CD4-positive, alpha-beta memory T cell (primary cell): ENCODE measurements at regions of chr10 and their contacts with region 1.

Region 1: DNA sequence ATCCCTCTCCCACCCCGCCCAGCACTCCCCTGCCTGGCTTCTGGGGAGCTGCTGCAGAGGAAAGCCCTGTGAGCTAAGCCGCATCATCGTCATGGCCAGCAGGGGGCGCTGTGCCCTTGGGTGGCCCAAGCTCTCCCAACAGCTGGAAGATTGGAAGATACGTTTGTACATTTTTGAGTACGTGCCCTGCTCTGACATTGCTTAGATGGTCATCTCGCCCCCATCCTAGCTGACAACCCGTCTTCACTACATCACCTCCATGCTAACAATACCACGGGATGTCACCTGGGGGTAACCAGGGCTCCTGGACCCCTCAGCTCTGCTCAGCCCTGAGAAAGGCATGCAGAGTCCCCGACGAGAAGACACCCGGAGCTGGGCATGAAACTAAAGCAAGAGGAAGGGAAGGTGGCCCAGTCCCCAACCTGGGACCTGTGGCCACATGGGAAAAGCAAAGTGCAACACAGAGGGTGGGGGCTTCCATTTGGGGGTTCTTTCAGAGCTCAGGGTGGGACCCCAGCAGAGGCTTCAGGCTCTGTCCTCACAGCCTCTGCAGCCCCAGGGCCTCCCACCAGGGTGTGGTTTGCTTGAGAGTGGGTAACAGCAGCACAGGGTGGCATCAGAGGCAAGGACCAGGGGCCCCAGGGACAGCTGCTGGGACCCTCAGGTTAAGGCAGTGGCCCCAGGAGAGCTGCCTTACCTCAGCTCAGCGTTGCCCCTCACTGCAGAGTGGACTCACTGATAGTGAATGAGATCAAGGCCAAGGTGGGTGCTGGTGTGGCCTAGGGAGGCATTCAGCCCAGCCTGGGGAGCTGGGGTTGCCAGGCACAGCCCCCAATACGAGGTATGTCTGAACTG is 136.7 kb downstream of the PTPN20 start:
- DNase-seq: peak; percentile 57 to 62 (median 60)
- H3K4me3 ChIP-seq: no peak overlapping the region
- H3K4me3 Mint-ChIP-seq: peak overlapping the region in 5 of 8 donors; percentile 9 to 55 (median 48)
- H3K27ac ChIP-seq: no peak overlapping the region
- H3K27ac Mint-ChIP-seq: peak overlapping the region in 4 of 7 donors; percentile 29 to 85 (median 63)
- H3K4me1 ChIP-seq: peaks cover 18% of the 10 kb centered on the region
- H3K4me1 Mint-ChIP-seq: peaks cover 15 to 25% (median 18%) of the 10 kb centered on the region in 4 donors
- H3K27me3 ChIP-seq: no peaks in the 10 kb centered on the region
- H3K27me3 Mint-ChIP-seq: no peaks in the 10 kb centered on the region

Region 2: GRCh38 chr10:47071891-47072290 is 24.0 kb after region 1 on chr10:
- CTCF ChIA-PET with region 1: interaction called, 11 read pairs
- POLR2A ChIA-PET with region 1: no interaction called
- intact Hi-C with region 1: no loop called
- DNase-seq: no peak
- H3K4me3 ChIP-seq: no peak overlapping the region
- H3K4me3 Mint-ChIP-seq: no peak overlapping the region
- H3K27ac ChIP-seq: no peak overlapping the region
- H3K27ac Mint-ChIP-seq: no peak overlapping the region
- H3K4me1 ChIP-seq: no peaks in the 10 kb centered on the region
- H3K4me1 Mint-ChIP-seq: peaks cover 0 to 3% (median 2%) of the 10 kb centered on the region in 4 donors
- H3K27me3 ChIP-seq: no peaks in the 10 kb centered on the region
- H3K27me3 Mint-ChIP-seq: no peaks in the 10 kb centered on the region

Region 3: DNA sequence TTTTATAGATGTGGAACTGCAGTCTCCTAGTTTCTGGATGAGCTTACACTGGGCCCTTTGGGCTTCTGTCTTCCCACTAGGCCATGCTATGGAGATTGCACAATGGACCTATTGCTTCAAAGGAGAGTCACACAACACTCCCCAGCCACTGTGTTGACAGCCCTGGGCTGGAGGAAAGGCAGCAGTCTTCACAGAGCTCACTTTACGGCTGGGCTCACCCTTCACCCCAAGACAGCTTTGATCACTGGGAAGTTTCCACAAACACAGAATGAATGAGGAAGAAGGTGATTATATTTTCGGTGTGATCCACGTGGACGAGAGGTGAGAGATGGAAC is 159.3 kb after region 1 on chr10:
- CTCF ChIA-PET with region 1: interaction called, 3 read pairs
- POLR2A ChIA-PET with region 1: no interaction called
- intact Hi-C with region 1: loop called (anchors 5 kb)
- DNase-seq: peak in 2 of 5 donors; percentile 7 to 28
- H3K4me3 ChIP-seq: peak overlapping the region in 1 of 2 donors; percentile 36
- H3K4me3 Mint-ChIP-seq: peak overlapping the region; percentile 61 to 82 (median 78)
- H3K27ac ChIP-seq: peak overlapping the region; percentile 22
- H3K27ac Mint-ChIP-seq: peak overlapping the region; percentile 77 to 94 (median 91)
- H3K4me1 ChIP-seq: peaks cover 60% of the 10 kb centered on the region
- H3K4me1 Mint-ChIP-seq: peaks cover 39 to 72% (median 64%) of the 10 kb centered on the region in 4 donors
- H3K27me3 ChIP-seq: no peaks in the 10 kb centered on the region
- H3K27me3 Mint-ChIP-seq: no peaks in the 10 kb centered on the region

Region 4: GRCh38 chr10:47253651-47254375 is 205.9 kb after region 1 on chr10:
- CTCF ChIA-PET with region 1: interaction called, 10 read pairs
- POLR2A ChIA-PET with region 1: interaction called, 3 read pairs
- intact Hi-C with region 1: no loop called
- DNase-seq: no peak
- H3K4me3 ChIP-seq: no peak overlapping the region
- H3K4me3 Mint-ChIP-seq: peak overlapping the region in 1 of 8 donors; percentile 30
- H3K27ac ChIP-seq: no peak overlapping the region
- H3K27ac Mint-ChIP-seq: peak overlapping the region in 1 of 7 donors; percentile 29
- H3K4me1 ChIP-seq: peaks cover 38% of the 10 kb centered on the region
- H3K4me1 Mint-ChIP-seq: peaks cover 20 to 52% (median 44%) of the 10 kb centered on the region in 4 donors
- H3K27me3 ChIP-seq: no peaks in the 10 kb centered on the region
- H3K27me3 Mint-ChIP-seq: no peaks in the 10 kb centered on the region

Region 5: DNA sequence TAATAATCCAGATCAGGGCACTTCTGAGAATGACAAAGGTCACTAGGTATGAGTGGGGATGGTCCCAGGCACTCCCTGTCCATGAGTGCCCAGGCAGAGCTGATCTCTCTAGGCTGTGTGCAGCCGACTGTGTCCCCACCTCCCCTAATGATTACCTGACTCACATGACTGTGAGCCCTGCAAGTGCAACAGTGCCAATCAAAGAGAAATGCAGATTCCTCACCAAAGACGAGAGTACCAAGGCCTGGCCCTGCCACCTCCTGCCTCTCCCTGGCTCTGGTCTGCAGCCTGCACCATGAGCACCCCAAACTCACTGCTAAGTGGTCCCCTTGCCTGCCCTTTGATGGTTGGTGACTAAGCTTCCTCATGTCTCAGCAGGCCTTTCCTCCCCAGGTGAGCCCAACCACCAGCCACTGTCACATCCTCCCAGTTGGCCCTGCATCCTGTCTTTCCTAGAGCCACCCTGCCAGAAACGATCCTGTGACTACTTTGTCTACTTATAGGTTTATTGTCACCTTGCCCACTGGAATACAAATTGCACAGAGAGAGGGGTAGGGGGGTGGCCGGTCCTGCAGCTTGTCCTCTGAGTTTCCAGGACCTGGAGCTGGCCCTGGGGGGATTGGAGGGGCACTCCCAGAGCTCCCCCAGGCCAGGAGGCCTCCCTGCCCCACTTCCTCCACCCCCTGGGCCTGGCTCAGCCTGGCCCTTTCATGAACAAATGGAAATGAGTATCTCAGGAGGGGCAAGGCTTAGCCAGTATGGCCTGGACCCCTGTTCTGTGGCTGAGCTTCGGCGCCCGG is 229.7 kb after region 1 on chr10:
- CTCF ChIA-PET with region 1: interaction called, 17 read pairs
- POLR2A ChIA-PET with region 1: no interaction called
- intact Hi-C with region 1: no loop called
- DNase-seq: peak in 4 of 5 donors; percentile 19 to 74 (median 34)
- H3K4me3 ChIP-seq: no peak overlapping the region
- H3K4me3 Mint-ChIP-seq: peak overlapping the region in 5 of 8 donors; percentile 22 to 76 (median 57)
- H3K27ac ChIP-seq: no peak overlapping the region
- H3K27ac Mint-ChIP-seq: peak overlapping the region in 6 of 7 donors; percentile 7 to 86 (median 46)
- H3K4me1 ChIP-seq: peaks cover 26% of the 10 kb centered on the region
- H3K4me1 Mint-ChIP-seq: peaks cover 11 to 33% (median 22%) of the 10 kb centered on the region in 4 donors
- H3K27me3 ChIP-seq: no peaks in the 10 kb centered on the region
- H3K27me3 Mint-ChIP-seq: no peaks in the 10 kb centered on the region

Region 6: DNA sequence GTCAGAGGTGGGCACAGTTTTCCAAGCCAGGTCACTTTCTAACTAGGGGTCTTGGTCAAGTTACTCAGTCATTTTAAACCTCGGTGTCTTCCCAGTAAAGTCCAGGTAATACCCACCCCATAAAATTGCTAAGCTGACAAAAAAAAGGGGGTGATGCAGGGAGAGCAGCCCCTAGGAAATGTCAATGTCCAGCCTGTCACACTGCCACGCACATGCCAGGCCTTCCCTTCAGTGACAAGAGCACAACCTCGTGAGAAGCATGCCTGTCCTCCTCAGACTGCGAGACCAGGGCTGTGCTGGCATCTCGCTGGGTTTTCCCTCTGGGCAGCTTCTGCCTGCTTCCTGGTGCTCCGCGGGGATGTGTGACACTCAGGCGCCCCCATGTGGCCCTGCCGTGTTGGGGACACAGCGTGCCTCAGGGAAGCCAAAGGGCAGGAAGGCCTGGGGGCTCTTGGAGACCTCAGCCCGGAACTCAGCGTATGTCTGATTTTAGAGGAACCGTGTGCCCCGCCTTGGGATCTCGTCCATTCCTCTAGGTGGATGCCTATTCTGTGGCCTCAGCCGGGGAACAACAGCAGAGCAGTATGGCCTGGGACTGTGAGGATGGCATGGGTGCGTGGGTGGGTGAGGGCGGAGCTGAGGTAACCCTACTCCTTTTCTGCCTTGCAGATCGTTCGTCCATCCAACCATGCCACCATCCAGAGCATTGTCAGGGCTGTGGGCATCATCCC is 264.2 kb after region 1 on chr10:
- CTCF ChIA-PET with region 1: interaction called, 244 read pairs
- POLR2A ChIA-PET with region 1: interaction called, 39 read pairs
- intact Hi-C with region 1: no loop called
- DNase-seq: peak; percentile 75 to 84 (median 79)
- H3K4me3 ChIP-seq: no peak overlapping the region
- H3K4me3 Mint-ChIP-seq: peak overlapping the region; percentile 48 to 80 (median 68)
- H3K27ac ChIP-seq: peak overlapping the region; percentile 27
- H3K27ac Mint-ChIP-seq: peak overlapping the region; percentile 81 to 87 (median 84)
- H3K4me1 ChIP-seq: peaks cover 32% of the 10 kb centered on the region
- H3K4me1 Mint-ChIP-seq: peaks cover 17 to 37% (median 27%) of the 10 kb centered on the region in 4 donors
- H3K27me3 ChIP-seq: no peaks in the 10 kb centered on the region
- H3K27me3 Mint-ChIP-seq: no peaks in the 10 kb centered on the region

Region 7: DNA sequence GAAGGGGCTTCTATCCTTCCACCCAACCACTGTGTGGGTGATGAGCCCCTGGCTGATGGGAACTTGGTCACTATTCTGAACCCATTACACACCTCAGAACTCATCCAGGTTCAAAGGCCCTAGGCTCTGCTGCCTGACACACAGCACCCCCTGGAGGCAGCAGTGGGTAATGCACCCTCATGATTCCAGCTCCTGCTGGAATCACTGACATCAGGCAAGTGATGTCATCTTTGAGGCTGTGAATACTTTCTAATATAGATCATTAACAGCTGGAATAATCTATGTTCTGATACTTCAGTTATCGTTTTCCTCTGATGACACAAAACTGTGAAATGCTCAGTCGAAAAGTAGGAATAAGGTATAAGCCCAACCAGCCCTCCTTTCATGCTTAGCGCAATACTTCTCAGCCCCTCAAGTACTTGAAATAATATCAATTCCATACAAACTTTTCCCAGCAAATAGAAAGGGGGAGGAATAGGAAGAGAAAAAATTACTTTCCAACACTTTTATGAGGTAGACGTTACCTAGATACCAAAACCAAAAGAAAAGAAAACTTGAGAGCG is 292.8 kb after region 1 on chr10:
- CTCF ChIA-PET with region 1: interaction called, 35 read pairs
- POLR2A ChIA-PET with region 1: interaction called, 5 read pairs
- intact Hi-C with region 1: loop called (anchors 1 kb)
- DNase-seq: peak; percentile 50 to 62 (median 54)
- H3K4me3 ChIP-seq: no peak overlapping the region
- H3K4me3 Mint-ChIP-seq: no peak overlapping the region
- H3K27ac ChIP-seq: no peak overlapping the region
- H3K27ac Mint-ChIP-seq: no peak overlapping the region
- H3K4me1 ChIP-seq: no peaks in the 10 kb centered on the region
- H3K4me1 Mint-ChIP-seq: no peaks in the 10 kb centered on the region
- H3K27me3 ChIP-seq: no peaks in the 10 kb centered on the region
- H3K27me3 Mint-ChIP-seq: peaks cover 7 to 15% of the 10 kb centered on the region in 2 donors